WTC11 (cell line): ENCODE measurements at regions of chr18 and their contacts with region 1.

Region 1: GRCh38 chr18:35029770-35030169 is 11.4 kb upstream of the MAPRE2 start:
- DNase-seq: no peak
- ATAC-seq: no peak
- H3K4me3 Mint-ChIP-seq: no peak overlapping the region
- H3K27ac Mint-ChIP-seq: no peak overlapping the region
- H3K4me1 Mint-ChIP-seq: peaks cover 16% of the 10 kb centered on the region
- H3K27me3 Mint-ChIP-seq: no peaks in the 10 kb centered on the region
- CTCF ChIP-seq: no peak

Region 2: GRCh38 chr18:35005963-35006577 is 23.7 kb before region 1 on chr18:
- CTCF ChIA-PET with region 1: interaction called, 11 read pairs
- POLR2A ChIA-PET with region 1: no interaction called
- DNase-seq: no peak
- ATAC-seq: peak; percentile 90
- H3K4me3 Mint-ChIP-seq: no peak overlapping the region
- H3K27ac Mint-ChIP-seq: no peak overlapping the region
- H3K4me1 Mint-ChIP-seq: no peaks in the 10 kb centered on the region
- H3K27me3 Mint-ChIP-seq: no peaks in the 10 kb centered on the region
- CTCF ChIP-seq: no peak

Region 3: GRCh38 chr18:35040988-35041814 is 11.4 kb after region 1 on chr18 and contains the start of gene MAPRE2:
- CTCF ChIA-PET with region 1: interaction called, 14 read pairs
- POLR2A ChIA-PET with region 1: interaction called, 5 read pairs
- DNase-seq: peak; percentile 99
- ATAC-seq: peak; percentile 92
- H3K4me3 Mint-ChIP-seq: peak within 1 kb of the TSS; percentile 95
- H3K27ac Mint-ChIP-seq: peak within 1 kb of the TSS; percentile 81
- H3K4me1 Mint-ChIP-seq: peaks cover 52% of the 10 kb centered on the region
- H3K27me3 Mint-ChIP-seq: no peaks in the 10 kb centered on the region; the same call in 1 of the 2 replicates
- CTCF ChIP-seq: no peak
- total RNA-seq, gene MAPRE2: 20.4 to 21.2 TPM (median 20.8 TPM) in 3 replicates

Region 4: GRCh38 chr18:35127201-35127600 is 97.4 kb after region 1 on chr18:
- CTCF ChIA-PET with region 1: interaction called, 37 read pairs
- POLR2A ChIA-PET with region 1: no interaction called
- DNase-seq: peak; percentile 44
- ATAC-seq: peak; percentile 88
- H3K4me3 Mint-ChIP-seq: no peak overlapping the region
- H3K27ac Mint-ChIP-seq: no peak overlapping the region
- H3K4me1 Mint-ChIP-seq: peaks cover 11% of the 10 kb centered on the region
- H3K27me3 Mint-ChIP-seq: no peaks in the 10 kb centered on the region
- CTCF ChIP-seq: no peak; the same call in 1 of the 2 replicates

Region 5: DNA sequence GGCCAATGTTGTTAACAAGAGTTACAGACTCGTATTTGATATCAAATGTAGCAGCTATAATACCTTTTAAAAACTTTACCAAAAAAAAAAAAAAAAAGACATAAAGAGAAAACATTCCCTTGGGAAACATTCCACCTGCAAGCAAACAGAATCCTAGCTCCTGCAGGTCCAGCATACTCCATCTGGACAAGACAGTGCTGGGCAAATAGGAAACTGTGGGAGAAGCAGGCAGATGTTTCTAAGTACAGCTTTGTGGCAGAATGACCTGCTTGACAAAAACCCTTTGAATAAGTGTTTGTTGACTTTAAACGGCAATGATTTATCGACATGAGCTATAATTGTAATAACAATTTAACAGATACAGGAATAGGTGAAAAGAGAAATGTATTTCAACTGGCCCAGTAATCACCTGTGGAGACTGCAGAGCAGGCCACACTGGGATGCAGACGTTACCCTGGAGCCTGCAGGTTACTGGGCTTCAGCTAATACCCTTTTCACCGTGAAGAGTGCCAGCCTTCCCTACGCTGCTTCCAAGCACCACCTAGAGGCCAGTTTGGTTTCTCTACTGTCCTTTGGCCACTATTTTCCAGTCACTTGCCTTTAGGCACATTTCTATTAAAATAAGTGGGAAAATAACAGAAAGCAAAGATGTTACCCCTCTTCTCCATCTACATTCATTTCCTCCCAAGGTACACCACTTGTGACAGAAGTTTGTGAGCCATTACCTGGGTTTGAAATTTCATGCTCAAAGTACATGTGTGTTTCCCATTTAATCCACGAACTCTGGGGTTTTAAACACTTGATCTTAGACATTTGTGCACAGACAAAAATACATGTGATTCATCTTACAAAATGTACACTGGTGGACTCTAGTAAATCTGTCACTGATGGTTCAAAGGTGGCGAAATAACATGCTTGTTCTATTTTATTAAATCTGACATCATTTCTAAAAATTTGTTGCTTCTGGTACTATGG is 114.1 kb after region 1 on chr18:
- CTCF ChIA-PET with region 1: interaction called, 42 read pairs
- POLR2A ChIA-PET with region 1: no interaction called
- DNase-seq: peak; percentile 62
- ATAC-seq: peak; percentile 98
- H3K4me3 Mint-ChIP-seq: no peak overlapping the region
- H3K27ac Mint-ChIP-seq: no peak overlapping the region
- H3K4me1 Mint-ChIP-seq: peaks cover 15% of the 10 kb centered on the region
- H3K27me3 Mint-ChIP-seq: peaks cover 9% of the 10 kb centered on the region
- CTCF ChIP-seq: no peak; the same call in 1 of the 2 replicates